Activated CD4-positive, alpha-beta T cell treated with anti-CD3 and anti-CD28 coated beads, Interleukin-2, amount 10 ng/mL, durations not matched to agents 24 days and 14 days (primary cell): ENCODE measurements at regions of chr9 and their contacts with region 1.

Region 1: DNA sequence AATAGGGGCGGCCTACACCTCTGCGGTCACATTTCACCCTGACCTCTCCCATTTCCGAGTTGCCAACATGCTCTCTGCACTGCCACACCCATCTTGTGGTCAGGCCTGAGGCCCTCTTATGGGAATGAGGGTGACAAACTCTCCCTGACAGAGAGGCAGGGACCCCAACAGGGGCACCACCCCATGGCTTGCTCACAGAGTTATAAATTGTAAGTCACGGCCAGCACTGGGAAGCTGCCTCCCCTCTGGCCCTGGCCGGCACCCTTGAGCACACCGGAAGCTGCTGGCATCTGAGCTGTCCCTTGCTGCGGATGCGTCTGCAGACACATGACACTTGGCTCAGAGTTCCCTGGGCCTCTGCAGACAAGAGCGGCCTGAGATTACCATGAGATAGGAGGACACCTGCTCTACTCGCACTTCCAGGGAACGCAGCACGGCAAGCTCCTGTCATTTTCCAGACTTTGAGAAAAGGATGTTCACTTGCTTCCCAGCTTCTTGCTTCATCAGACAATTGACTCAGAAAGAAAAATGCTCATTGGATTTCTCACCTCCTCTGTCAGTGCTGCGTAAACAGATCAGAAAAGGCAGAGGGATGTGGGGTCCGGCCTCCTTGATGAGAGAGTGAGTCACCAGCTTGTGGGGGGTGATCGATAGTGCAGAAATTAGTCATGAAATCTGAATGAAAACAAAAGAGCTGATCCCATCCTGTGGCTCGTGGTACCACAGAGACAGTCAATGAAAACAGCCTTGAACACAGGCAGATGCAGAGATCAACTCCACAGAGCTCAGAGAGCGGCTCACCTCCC is 269.8 kb downstream of the SYK start:
- DNase-seq: peak; percentile 84
- H3K4me3 Mint-ChIP-seq: peak overlapping the region; percentile 50
- H3K27ac Mint-ChIP-seq: peak overlapping the region; percentile 96
- H3K4me1 Mint-ChIP-seq: peaks cover 17% of the 10 kb centered on the region
- H3K27me3 Mint-ChIP-seq: no peaks in the 10 kb centered on the region

Region 2: DNA sequence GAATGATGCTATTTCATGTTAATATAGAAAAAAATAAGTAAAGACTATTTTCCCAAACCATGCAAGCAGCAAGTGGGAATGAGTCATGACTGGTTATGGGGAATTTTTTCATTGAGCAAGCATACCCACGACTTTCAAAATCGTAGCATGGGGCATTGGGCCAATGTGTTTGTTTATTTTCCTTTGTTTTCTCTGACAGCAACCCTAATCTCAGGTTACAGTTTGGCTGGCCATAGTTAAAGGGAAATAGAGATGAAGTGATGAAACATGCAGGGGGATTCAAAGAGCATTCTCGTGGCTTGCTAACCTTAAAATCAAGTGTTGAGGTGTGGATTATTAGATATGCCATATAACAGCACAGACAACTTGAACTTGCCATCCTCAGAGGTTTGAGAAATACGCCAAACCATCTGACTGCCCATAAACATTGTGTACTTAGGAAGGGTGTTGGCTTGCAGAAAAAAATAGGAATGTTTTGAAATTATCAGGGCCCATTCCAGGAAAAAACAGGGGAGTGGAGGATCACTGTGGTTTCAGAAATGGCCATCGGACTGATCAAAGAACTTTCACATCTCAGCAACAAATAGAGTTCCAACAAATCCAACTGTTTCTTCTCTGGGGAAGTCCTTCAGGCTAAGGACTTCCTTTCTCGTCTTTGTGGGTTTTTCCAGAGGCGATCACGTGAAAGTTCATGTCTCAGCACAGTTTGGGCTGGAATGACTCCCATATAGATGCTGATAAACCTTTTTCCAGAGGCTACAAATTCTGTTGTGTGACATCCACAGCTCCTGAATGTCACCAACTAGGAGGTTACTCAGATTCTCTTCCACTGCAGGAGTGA is 10.7 kb before region 1 on chr9:
- intact Hi-C with region 1: loop called (anchors 1 kb)
- DNase-seq: peak; percentile 36
- H3K4me3 Mint-ChIP-seq: peak overlapping the region; percentile 7
- H3K27ac Mint-ChIP-seq: peak overlapping the region; percentile 89
- H3K4me1 Mint-ChIP-seq: peaks cover 36% of the 10 kb centered on the region
- H3K27me3 Mint-ChIP-seq: no peaks in the 10 kb centered on the region

Region 3: DNA sequence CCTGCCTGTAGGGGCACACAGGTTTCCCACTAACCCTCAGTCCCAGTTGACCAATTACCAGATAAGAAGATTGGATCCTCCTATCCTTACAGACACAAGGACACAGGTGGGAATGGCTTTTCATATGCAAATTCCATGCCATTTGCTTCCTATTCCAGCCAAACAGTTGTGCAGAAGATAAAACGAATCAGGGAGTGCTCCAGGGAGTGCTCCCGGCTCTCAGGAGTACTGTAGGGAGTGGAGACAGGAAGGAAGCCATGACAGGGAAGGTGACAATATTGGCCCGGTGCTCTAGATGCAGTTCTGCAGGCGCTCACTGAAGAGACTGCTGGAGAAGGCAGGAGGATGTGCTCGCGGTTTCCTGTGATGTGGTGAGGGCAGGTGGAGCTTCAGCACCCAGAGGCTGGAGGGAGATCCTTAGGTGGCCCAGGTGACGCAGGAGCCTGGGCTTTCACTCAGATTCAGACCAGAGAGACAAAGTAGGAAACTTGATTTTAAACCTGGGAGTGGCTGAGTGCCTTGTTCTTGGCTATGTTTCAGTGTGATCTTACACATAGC is 30.3 kb after region 1 on chr9:
- intact Hi-C with region 1: loop called (anchors 1 kb)
- DNase-seq: peak; percentile 97
- H3K4me3 Mint-ChIP-seq: peak overlapping the region; percentile 70
- H3K27ac Mint-ChIP-seq: peak overlapping the region; percentile 89
- H3K4me1 Mint-ChIP-seq: peaks cover 67% of the 10 kb centered on the region
- H3K27me3 Mint-ChIP-seq: no peaks in the 10 kb centered on the region